ENCODE measurements at regions of chr10 and their contacts with region 1.

Region 1: GRCh38 chr10:116292493-116292892 is 19.5 kb upstream of the GFRA1 start:
- DNase-seq: no peak
- ATAC-seq: no peak
- H3K4me3 ChIP-seq: no peak overlapping the region
- H3K27ac ChIP-seq: no peak overlapping the region
- H3K4me1 ChIP-seq: no peaks in the 10 kb centered on the region
- H3K27me3 ChIP-seq: no peaks in the 10 kb centered on the region
- CTCF ChIP-seq: no peak

Region 2: GRCh38 chr10:115795964-115796363 is 496.5 kb before region 1 on chr10:
- intact Hi-C with region 1: loop called in 1 of 3 experiments (anchors 5 kb)
- DNase-seq: no peak
- ATAC-seq: no peak
- H3K4me3 ChIP-seq: no peak overlapping the region
- H3K27ac ChIP-seq: no peak overlapping the region
- H3K4me1 ChIP-seq: no peaks in the 10 kb centered on the region
- H3K27me3 ChIP-seq: no peaks in the 10 kb centered on the region
- CTCF ChIP-seq: no peak

Region 3: DNA sequence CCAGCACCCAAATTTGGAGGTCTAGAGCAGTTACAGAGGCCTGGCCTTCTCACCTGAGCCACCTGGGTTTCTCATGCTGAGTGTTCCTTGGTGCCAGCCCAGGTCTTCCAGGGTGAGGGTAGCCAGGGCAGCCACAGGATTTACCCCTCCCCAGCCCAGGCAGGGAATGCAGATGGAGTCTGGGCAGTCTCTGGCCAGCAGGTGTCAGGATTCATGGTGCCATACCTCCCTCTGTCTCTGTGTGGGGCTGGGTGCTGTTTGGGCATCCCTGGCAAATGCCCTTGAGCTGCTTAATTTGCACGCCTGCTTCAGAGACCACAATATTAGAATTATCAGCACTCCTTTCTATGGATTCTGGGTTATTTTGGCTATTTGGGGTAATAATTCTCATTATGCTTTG is 266.2 kb before region 1 on chr10:
- intact Hi-C with region 1: no loop called
- DNase-seq: no peak
- ATAC-seq: no peak
- H3K4me3 ChIP-seq: no peak overlapping the region
- H3K27ac ChIP-seq: no peak overlapping the region
- H3K4me1 ChIP-seq: no peaks in the 10 kb centered on the region
- H3K27me3 ChIP-seq: no peaks in the 10 kb centered on the region
- CTCF ChIP-seq: no peak

Measured in pancreas (tissue), 10 donors.